Posterior vena cava (tissue), 2 donors: ENCODE measurements at regions of chr13 and their contacts with region 1.

Region 1: GRCh38 chr13:58048473-58049069 is 417.0 kb downstream of the PCDH17 start:
- DNase-seq: no peak

Region 2: DNA sequence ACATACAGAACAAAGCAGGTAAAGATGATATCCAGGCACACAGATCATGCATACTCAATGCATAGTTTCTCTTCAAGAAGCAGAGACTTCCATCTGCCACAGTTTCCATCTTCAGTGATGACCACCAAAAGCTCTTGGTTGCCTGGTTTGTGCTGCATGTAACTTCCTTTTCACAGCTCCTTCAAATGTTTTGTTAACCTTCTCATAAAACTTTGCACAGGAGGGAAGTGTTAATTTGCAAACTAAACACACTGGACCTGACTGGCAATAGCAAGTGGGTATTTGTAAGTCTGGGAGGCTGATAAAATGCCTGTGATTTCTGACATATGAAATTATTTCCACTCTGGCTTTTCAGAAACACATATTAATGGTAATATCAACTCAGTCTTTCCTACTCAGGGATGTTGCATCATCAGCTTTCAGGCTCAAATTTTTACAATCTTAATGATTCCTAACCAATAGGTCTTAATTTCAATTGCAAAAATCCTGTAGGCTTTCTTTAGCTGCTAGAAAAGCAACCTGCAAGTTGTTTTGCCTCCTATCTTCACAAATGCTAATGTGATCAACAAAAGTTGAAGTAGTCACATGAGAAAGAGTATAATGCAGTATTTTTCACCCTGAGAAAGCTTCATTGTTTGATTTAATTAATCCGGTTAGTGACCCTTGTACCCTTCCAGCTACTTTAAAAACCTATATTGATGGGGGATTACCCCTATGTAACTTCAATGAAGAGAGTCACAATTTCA is 1539.6 kb after region 1 on chr13:
- intact Hi-C with region 1: loop called in 1 of 2 experiments (anchors 10 kb)
- DNase-seq: no peak